Right ventricle myocardium inferior (tissue), 1 donor: ENCODE measurements at regions of chr10 and their contacts with region 1.

Region 1: DNA sequence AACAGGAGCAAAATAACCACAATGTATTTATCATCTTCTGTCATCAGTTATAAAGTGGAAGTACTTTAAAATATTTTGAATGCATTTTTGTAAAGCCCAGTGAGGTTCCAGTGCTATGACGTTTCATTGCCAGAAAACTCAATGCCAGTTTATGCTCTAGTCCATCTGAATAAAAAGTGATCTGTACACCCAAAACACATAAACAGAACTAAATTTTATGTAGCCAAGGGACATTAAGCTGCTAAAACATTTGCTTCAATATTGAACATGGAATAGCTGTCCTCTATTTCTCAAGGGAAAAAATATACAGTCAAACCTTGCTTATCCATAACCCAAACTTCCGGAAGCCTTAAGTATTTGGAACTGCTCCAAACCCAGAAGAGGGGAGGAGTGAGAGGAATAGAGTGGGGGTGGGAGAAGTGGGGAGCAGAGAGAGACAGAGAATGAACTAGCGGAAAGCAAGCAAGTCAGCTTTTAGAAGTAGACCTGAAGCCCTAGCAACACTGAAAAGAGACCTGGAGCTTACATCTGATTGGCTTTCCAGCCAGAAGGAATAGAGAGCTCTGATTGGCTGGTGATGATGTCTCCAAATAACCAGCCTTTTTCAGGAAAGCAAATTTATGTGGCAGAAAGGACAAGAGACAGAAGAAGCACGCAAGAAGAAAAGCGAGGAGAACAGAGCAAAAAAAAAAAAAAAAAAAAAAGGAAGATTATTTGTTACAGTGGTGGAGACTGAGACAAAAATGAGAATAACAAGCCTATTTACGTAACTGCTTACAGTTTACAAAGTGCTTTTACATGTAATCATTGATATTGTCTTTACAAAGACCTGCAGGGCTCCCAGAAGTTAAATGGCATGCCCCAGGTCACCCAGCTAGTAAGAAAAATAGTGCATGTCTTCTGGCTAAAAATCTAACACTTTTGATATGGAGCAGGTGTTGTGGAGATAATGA is 196.0 kb downstream of the RNLS start:
- DNase-seq: no peak
- ATAC-seq: peak; percentile 86

Region 2: DNA sequence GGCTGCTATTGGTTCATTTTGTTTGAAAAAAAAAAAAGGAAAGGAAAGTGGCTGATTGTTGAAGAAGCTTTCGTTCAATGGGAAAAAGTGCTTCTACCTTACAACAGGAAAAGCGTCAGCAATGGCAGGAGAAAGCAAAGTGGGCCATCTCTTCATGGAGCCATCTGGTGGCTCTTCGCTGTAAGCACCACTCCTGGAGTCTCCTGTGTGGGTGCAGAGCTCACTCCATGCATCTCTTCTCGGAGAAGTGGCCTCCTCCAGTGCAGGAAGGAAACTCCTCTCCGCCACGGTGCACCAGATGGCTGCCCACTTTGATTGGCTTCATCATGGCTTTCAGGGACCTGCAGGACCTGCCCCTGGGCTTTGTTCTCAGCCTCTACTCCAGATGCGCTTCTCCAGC is 272.7 kb before region 1 on chr10:
- intact Hi-C with region 1: loop called (anchors 10 kb)
- DNase-seq: no peak
- ATAC-seq: peak; percentile 80

Region 3: DNA sequence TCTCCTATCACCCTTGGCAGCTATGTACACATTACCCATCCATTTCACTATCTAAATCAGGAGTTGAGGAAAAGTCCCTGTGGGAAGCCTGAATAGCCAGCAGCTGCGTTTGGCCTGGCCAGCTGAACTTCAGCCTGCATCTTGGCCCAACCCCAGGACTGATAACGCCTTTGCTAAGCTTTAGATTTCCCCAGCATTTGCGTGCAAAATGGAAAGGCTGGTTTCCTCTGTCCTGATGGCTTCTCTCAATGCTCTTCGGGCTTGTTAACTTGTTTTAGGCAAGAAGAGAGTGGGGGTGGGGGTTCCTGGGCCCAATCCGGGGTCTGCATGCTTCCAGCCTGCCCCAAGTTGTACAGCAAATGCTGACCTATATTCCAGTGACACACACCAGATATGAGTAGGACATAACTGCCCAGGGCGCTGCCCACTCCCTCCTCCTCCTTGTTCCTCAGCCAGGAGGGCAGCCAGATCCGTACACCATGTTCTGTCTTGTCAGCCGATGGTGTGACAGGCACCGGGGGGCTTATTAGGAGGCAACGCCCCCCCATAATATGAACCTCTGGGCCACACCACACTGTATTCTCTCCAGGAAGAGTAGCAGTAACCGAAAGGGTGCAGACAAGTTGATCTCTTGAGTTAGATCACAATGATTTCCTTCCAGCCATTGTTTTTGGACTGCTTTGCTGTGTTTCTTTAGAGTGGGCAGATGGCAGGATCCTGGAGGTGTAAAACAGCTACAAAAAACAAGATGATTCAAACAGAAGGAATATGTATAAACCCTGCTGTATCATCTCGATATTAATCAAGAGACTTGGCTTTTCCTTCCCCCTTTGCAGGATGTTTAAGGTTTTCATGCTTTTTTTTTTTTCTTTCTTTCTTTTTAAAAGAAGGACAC is 143.0 kb before region 1 on chr10:
- intact Hi-C with region 1: loop called (anchors 5 kb)
- DNase-seq: peak; percentile 86
- ATAC-seq: peak; percentile 94

Region 4: DNA sequence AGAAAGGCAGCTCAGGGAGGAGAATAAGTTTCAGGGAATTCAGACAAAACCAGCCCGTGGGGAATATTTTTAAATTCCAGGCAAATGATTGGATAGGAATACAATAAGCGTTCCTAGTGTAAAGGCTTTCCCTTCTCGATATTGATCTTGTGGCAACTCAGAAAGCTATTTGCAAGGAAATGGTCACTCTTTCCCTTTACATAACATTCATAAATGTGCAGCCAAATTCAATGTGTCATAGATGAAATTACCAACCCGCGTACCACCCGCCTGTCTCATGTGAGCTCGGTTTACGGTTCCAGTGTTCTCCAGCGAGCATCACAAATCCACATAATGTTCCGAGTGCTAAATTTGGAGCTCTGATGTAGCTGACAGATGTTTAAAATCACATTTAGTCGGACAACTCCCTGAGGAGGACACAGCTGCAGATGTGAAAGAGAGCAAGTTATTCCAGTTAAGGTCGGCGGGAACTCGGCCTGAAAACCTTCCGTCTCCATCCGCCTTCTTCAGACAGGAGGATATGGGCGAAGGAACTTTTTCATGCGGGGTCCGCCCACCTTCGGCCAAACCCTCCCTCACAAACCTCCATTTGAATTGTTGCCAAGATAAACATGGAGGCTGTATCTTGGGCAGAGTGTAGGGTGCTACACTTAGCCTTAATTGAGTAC is 130.9 kb before region 1 on chr10:
- intact Hi-C with region 1: loop called (anchors 5 kb)
- DNase-seq: peak; percentile 80
- ATAC-seq: peak; percentile 93